B cell (primary cell): ENCODE measurements at regions of chr3 and their contacts with region 1.

Region 1: GRCh38 chr3:186617038-186617946 is 4.4 kb downstream of the AHSG start:
- DNase-seq: peak; percentile 86
- ATAC-seq: peak; percentile 95
- H3K4me3 ChIP-seq: peak overlapping the region in 2 of 5 experiments; percentile 29 to 30
- H3K4me3 Mint-ChIP-seq: peak overlapping the region; percentile 74
- H3K27ac ChIP-seq: no peak overlapping the region
- H3K27ac Mint-ChIP-seq: no peak overlapping the region
- H3K4me1 ChIP-seq: peaks cover 19% of the 10 kb centered on the region in 2 donors
- H3K4me1 Mint-ChIP-seq: peaks cover 13% of the 10 kb centered on the region
- H3K27me3 ChIP-seq: peaks cover 0 to 35% (median 9%) of the 10 kb centered on the region in 4 experiments
- H3K27me3 Mint-ChIP-seq: peaks cover 58% of the 10 kb centered on the region
- CTCF ChIP-seq: peak; percentile 95

Region 2: DNA sequence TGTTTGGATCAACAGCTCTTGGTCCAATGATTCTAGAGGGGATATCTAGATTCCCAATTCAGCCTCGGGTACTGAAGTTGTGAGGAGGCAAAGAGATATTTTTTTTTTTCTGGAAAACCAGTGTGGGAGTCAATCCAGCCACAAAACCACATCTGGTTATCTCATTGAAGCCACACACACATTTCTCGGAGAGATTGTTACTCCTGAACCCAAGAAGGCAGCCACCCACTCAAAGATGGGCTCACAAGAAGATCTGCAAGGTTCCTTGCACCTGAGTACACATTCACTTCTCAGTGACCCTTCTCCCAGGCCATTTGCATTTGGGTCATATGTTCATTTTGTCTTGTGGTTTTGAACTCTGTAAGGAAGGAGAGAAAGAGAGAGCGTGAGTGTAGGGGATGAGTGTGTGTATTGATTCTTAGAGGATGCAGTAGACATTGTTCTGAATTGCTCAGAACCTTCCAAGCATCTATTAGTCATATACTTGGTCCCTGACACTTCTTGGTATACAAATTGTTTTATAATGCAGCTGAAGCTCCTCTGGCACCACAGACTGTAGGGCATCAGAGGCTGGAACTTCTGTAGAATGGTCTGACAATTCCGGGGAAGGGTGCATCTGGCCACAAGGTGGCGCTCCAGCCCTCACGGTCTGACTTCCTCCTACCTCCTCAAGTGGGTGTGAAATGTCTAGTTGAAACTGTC is 640.2 kb before region 1 on chr3:
- CTCF ChIA-PET with region 1: interaction called, 166 read pairs
- POLR2A ChIA-PET with region 1: no interaction called
- intact Hi-C with region 1: loop called (anchors 1 kb)
- DNase-seq: peak; percentile 84
- ATAC-seq: peak; percentile 88
- H3K4me3 ChIP-seq: no peak overlapping the region
- H3K4me3 Mint-ChIP-seq: no peak overlapping the region
- H3K27ac ChIP-seq: no peak overlapping the region
- H3K27ac Mint-ChIP-seq: peak overlapping the region; percentile 11
- H3K4me1 ChIP-seq: peaks cover 0 to 2% of the 10 kb centered on the region in 2 donors
- H3K4me1 Mint-ChIP-seq: peaks cover 7% of the 10 kb centered on the region
- H3K27me3 ChIP-seq: no peaks in the 10 kb centered on the region
- H3K27me3 Mint-ChIP-seq: no peaks in the 10 kb centered on the region
- CTCF ChIP-seq: peak; percentile 93

Region 3: DNA sequence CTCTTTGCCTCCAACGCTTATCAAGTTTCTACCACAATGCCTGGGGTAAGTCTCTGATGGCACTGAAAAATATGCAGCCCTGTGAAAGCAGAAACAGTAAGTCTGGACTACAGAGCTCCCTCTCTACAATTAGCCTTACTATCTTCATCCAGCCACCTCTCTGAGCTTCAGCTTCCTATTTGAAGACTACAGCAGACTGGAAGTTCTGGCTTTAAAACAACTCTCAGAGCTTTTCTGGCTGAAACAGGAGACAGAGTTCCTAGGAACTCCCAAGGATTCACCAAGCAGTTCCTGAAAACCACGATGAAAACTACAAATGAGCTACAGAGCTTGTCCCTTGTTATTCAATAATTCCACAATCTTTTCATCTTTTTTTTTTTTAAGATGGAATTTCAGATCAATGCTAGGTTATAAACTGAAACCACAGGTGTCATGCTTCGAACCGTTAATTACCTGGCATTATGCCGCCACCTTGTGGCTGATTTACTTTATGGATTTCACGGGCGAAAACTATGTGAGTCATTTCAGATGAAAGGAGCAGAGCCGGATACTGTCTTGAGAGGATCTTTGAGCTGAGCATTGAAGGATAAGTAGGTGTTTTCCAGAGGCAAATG is 77.0 kb before region 1 on chr3:
- CTCF ChIA-PET with region 1: interaction called, 66 read pairs
- POLR2A ChIA-PET with region 1: no interaction called
- intact Hi-C with region 1: no loop called
- DNase-seq: peak; percentile 89
- ATAC-seq: peak; percentile 84
- H3K4me3 ChIP-seq: peak overlapping the region in 1 of 5 experiments; percentile 23
- H3K4me3 Mint-ChIP-seq: no peak overlapping the region
- H3K27ac ChIP-seq: no peak overlapping the region
- H3K27ac Mint-ChIP-seq: no peak overlapping the region
- H3K4me1 ChIP-seq: peaks cover 8 to 19% of the 10 kb centered on the region in 2 donors
- H3K4me1 Mint-ChIP-seq: peaks cover 25% of the 10 kb centered on the region
- H3K27me3 ChIP-seq: peaks cover 0 to 11% (median 5%) of the 10 kb centered on the region in 4 experiments
- H3K27me3 Mint-ChIP-seq: no peaks in the 10 kb centered on the region
- CTCF ChIP-seq: peak; percentile 82

Region 4: DNA sequence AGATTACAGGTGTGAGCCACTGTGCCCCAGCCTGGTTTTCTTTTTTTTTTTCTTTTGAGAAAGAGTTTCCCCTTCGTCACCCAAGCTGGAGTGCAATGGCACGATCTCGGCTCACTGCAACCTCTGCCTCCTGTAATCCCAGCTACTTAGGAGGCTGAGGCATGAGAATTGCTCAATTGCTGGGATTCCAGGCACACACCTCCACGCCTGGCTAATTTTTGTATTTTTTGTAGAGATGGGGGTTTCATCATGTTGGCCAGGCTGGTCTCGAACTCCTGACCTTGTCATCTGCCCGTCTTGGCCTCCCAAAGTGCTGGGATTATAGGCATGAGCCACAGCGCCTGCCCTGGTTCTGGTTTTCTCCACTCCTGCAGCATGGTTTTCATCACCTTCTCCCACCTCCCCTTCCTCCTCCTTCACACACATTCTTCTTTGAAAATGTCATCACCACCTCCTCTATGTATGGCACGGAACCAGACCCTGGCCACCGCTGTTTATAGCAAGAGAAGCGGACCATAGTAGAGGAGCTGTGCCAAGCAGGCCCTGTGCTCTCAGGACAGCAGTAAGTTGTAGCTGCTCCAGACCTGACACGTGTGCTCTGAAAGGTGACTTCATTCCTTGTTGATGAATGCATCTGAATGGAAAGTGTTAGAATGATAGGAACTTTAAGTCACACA is 19.0 kb before region 1 on chr3:
- CTCF ChIA-PET with region 1: interaction called, 24 read pairs
- POLR2A ChIA-PET with region 1: no interaction called
- intact Hi-C with region 1: no loop called
- DNase-seq: no peak
- ATAC-seq: no peak
- H3K4me3 ChIP-seq: no peak overlapping the region
- H3K4me3 Mint-ChIP-seq: no peak overlapping the region
- H3K27ac ChIP-seq: no peak overlapping the region
- H3K27ac Mint-ChIP-seq: no peak overlapping the region
- H3K4me1 ChIP-seq: no peaks in the 10 kb centered on the region
- H3K4me1 Mint-ChIP-seq: no peaks in the 10 kb centered on the region
- H3K27me3 ChIP-seq: no peaks in the 10 kb centered on the region
- H3K27me3 Mint-ChIP-seq: peaks cover 9% of the 10 kb centered on the region
- CTCF ChIP-seq: no peak

Region 5: DNA sequence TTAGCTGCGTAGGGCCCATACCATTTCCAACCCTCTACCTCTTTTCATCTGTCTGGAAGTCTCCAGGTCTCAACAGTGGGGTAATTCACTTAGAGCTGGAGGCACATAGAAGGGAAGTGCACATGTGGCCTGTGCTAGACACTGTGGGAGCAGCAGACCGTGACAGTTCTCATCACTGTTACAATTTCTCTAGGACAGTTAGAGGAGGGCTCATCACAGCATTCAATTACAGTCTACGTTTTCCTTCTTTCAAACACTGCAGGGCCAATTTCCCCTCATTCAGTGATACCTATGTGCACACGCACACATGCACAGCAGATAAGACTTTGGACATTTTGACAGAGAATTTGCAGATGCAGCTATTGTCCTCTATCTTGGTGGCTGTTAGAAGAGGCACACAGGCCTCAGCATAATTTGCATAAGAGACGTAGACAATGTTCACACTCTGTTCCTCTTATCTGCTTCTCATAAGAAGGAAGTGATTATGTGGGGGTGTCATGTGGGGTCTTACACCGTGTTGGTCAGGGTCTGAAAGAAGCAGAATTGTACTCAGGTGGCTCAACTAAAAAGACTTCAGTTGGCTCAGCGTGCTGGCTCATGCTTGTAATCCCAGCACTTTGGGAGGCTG is 35.9 kb after region 1 on chr3:
- CTCF ChIA-PET with region 1: interaction called, 70 read pairs
- POLR2A ChIA-PET with region 1: no interaction called
- intact Hi-C with region 1: no loop called
- DNase-seq: peak; percentile 76
- ATAC-seq: peak; percentile 95
- H3K4me3 ChIP-seq: peak overlapping the region in 1 of 5 experiments; percentile 33
- H3K4me3 Mint-ChIP-seq: peak overlapping the region; percentile 69
- H3K27ac ChIP-seq: peak overlapping the region; percentile 34 to 86
- H3K27ac Mint-ChIP-seq: peak overlapping the region; percentile 92
- H3K4me1 ChIP-seq: peaks cover 28 to 29% of the 10 kb centered on the region in 2 donors
- H3K4me1 Mint-ChIP-seq: peaks cover 26% of the 10 kb centered on the region
- H3K27me3 ChIP-seq: no peaks in the 10 kb centered on the region
- H3K27me3 Mint-ChIP-seq: no peaks in the 10 kb centered on the region
- CTCF ChIP-seq: no peak

Region 6: GRCh38 chr3:186683979-186684378 is 66.7 kb after region 1 on chr3:
- CTCF ChIA-PET with region 1: no interaction called
- POLR2A ChIA-PET with region 1: no interaction called
- intact Hi-C with region 1: no loop called
- DNase-seq: no peak
- ATAC-seq: no peak
- H3K4me3 ChIP-seq: no peak overlapping the region
- H3K4me3 Mint-ChIP-seq: no peak overlapping the region
- H3K27ac ChIP-seq: no peak overlapping the region
- H3K27ac Mint-ChIP-seq: no peak overlapping the region
- H3K4me1 ChIP-seq: no peaks in the 10 kb centered on the region
- H3K4me1 Mint-ChIP-seq: no peaks in the 10 kb centered on the region
- H3K27me3 ChIP-seq: peaks cover 0 to 21% (median 6%) of the 10 kb centered on the region in 4 experiments
- H3K27me3 Mint-ChIP-seq: peaks cover 53% of the 10 kb centered on the region
- CTCF ChIP-seq: no peak

Region 7: DNA sequence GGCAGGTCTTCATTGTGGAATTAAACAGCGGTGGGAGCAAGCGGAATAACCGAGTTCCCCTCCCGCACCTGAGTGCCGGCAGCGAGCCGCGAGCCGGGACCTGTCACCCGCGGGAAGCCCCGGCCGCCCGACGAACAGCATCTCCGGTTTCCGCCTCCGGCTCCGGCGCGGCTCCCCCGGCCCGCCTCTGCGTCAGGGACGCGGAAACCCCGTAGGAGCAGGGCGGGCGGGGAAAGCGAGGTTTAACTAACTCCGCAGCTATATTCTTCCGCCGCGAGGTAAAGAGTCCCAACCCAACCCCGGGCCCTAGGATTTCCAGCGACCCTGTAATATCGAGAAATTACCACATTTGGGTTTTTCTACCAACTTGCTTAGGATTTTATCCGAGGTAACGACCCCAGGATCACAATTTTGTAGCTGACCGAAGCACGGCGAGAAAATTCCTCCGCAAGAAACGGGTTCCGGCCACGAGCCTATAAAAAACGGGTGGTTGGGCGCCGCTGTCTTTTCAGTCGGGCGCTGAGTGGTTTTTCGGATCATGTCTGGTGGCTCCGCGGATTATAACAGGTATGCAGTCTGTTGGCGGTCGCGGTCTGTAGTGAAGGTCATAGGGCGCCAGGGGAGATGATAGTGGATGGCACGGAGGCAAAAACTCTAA is 165.9 kb after region 1 on chr3 and contains the start of gene EIF4A2:
- CTCF ChIA-PET with region 1: interaction called, 16 read pairs
- POLR2A ChIA-PET with region 1: interaction called, 21 read pairs
- intact Hi-C with region 1: no loop called
- DNase-seq: peak; percentile 97
- ATAC-seq: peak; percentile 77
- H3K4me3 ChIP-seq: peak within 1 kb of the TSS; percentile 80 to 100 (median 90)
- H3K4me3 Mint-ChIP-seq: peak within 1 kb of the TSS; percentile 97
- H3K27ac ChIP-seq: peak within 1 kb of the TSS; percentile 97 to 98
- H3K27ac Mint-ChIP-seq: peak within 1 kb of the TSS; percentile 99
- H3K4me1 ChIP-seq: peaks cover 37 to 40% of the 10 kb centered on the region in 2 donors
- H3K4me1 Mint-ChIP-seq: peaks cover 52% of the 10 kb centered on the region
- H3K27me3 ChIP-seq: no peaks in the 10 kb centered on the region
- H3K27me3 Mint-ChIP-seq: no peaks in the 10 kb centered on the region
- CTCF ChIP-seq: no peak
- total RNA-seq, gene EIF4A2: 490 and 506 TPM in 2 replicates

Region 8: DNA sequence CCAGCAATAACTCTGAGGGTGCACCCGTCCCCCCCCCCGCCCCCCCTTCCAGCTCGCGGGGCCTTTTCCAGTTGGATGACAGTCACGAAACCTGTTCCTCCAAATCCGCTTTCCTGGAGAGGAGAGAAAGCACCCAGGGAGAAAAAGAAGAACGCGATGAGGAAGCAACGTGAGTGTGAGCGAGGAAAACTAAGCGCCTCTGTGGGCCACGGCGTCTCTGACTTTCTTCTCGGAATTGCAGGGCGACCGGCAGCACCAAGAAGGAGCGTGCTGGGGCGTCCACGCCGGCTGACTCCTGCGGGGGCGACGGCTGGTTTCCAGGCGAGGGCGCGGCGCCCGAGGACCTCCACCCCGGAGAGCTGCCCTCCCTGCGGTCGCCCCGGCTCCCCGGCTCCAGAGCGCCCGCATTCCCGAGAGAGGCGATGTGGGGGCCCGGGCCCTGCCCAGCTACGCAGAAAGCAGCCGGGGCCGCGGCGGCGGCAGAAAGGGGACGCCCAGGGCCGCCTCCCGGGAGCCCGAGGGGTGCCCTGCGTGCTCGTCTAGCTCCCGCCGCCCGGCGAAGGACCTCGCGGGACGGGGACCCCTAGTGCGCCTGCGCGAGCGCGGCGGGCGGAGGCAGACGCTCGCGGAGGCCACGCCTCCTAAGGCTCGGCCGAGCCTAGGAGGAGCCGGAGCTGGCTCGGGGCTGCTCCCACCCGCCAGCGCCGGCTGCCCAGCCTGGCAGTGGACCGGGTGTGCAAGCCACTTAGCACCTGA is 209.9 kb after region 1 on chr3:
- CTCF ChIA-PET with region 1: interaction called, 237 read pairs
- POLR2A ChIA-PET with region 1: no interaction called
- intact Hi-C with region 1: loop called (anchors 1 kb)
- DNase-seq: peak; percentile 92
- ATAC-seq: peak; percentile 95
- H3K4me3 ChIP-seq: peak overlapping the region in 4 of 5 experiments; percentile 57 to 78 (median 70)
- H3K4me3 Mint-ChIP-seq: peak overlapping the region; percentile 79
- H3K27ac ChIP-seq: peak overlapping the region in 1 of 2 donors; percentile 55
- H3K27ac Mint-ChIP-seq: peak overlapping the region; percentile 41
- H3K4me1 ChIP-seq: peaks cover 24 to 28% of the 10 kb centered on the region in 2 donors
- H3K4me1 Mint-ChIP-seq: peaks cover 21% of the 10 kb centered on the region
- H3K27me3 ChIP-seq: peaks cover 0 to 69% (median 42%) of the 10 kb centered on the region in 4 experiments
- H3K27me3 Mint-ChIP-seq: peaks cover 54% of the 10 kb centered on the region
- CTCF ChIP-seq: no peak